GM23248 (cell line): ENCODE measurements at regions of chr20 and their contacts with region 1.

Region 1: DNA sequence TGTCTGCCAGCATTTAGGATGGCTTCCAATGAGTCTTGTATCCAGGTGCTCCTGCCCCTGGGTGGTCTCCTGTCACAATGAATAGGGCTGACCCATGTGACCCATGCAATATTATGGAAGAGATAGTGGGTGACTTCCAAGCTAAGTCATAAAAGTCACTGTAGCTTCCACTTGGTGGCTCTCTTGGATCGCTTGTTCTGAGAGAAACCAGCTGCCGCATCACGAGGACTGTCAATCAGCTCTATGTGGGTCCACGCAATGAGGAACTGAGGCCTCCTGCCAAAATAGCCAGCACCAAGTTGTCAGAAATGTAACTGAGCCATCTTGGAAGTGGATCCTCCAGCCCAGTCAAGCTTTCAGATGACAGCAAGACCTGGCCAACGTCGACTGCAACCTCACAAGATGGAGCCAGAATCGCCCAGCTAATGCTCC is 14.9 kb upstream of the MATN4 start:
- DNase-seq: peak; percentile 53
- H3K4me3 ChIP-seq: no peak overlapping the region
- H3K27ac ChIP-seq: peak overlapping the region; percentile 39
- H3K4me1 ChIP-seq: no peaks in the 10 kb centered on the region
- H3K27me3 ChIP-seq: no peaks in the 10 kb centered on the region

Region 2: GRCh38 chr20:45444050-45444449 is 121.1 kb after region 1 on chr20:
- in situ Hi-C with region 1: loop called (anchors 5 kb)
- DNase-seq: no peak
- H3K4me3 ChIP-seq: no peak overlapping the region
- H3K27ac ChIP-seq: no peak overlapping the region
- H3K4me1 ChIP-seq: no peaks in the 10 kb centered on the region
- H3K27me3 ChIP-seq: no peaks in the 10 kb centered on the region; the same call in none of the 2 replicates

Region 3: DNA sequence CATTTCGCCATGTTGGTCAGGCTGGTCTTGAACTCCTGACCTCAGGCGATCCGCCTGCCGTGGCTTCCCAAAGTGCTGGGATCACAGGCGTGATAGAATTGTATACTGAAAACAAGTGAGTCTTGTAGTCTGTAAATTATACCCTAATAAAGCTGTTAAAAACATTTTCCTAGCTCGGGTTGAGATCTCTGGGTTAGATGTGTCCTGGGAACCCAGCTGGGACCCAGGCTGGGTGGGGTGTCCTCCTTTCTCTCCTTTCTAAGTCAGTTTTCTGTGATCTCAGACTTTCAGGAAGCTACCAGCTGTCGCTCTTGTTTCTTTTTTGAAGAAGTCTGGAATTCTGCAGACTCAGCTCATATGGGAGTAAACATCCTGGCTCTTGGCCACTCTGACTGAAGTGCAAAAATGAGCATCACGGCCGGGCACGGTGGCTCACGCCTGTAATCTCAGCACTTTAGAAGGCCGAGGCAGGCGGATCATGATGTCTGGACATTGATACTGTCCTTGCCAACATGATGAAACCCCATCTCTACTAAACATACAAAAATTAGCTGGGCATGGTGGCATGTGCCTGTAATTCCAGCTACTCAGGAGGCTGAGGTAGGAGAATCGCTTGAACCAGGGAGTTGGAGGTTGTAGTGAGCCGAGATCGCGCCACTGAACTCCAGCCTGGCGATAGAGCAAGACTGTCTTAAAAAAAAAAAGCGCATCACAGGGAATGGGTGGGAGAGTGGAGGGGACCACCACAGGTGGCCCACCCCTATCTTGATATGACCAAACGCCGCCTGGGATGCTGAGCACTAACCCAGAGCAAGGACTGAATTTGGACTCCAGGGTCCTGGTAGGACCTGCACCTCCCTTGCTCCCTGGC is 601.7 kb after region 1 on chr20:
- in situ Hi-C with region 1: no loop called
- DNase-seq: peak; percentile 73
- H3K4me3 ChIP-seq: peak overlapping the region; percentile 37
- H3K27ac ChIP-seq: no peak overlapping the region
- H3K4me1 ChIP-seq: no peaks in the 10 kb centered on the region; the same call in none of the 2 replicates
- H3K27me3 ChIP-seq: no peaks in the 10 kb centered on the region